ENCODE measurements at regions of chr21 and their contacts with region 1.

Region 1: DNA sequence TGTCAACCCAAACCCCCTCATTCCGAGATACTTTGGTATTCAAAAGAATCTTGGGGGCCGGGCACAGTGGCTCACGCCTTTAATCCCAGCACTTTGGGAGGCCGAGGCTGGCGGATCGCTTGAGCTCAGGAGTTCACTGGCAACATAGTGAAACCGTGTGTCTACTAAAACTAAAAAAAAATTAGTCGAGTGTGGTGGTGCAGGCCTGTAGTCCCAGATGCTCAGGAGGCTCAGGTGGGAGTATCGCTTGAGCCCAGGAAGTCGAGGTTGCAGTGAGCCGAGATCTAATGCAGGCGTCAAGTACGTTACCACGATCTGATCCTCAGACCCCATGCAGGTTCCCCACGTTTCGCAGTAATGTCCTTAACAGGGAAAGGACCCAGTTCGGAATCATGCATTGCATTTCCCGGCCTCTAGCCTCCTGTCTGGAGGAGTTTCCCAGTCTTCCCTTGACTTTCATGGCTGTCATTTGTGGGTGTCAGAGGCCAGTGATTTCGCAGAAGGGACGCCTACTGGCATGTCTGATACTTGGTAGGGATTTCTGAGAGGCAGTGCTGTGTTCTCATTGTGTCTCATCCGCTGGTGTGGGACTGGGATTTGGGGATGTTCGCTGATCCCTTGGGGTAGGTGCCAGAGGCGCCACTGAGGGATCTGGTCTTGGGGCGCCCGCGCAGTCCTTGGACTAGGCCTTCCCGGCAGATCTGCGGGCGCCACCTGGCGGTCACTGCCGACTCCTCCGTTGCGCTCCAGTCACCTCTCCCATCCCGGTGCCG is 39.3 kb upstream of the HMGN1 start:
- DNase-seq: peak; percentile 81
- H3K4me3 Mint-ChIP-seq: peak overlapping the region; percentile 84
- H3K27ac Mint-ChIP-seq: peak overlapping the region; percentile 87
- H3K4me1 Mint-ChIP-seq: peaks cover 20% of the 10 kb centered on the region
- H3K27me3 Mint-ChIP-seq: no peaks in the 10 kb centered on the region

Region 2: DNA sequence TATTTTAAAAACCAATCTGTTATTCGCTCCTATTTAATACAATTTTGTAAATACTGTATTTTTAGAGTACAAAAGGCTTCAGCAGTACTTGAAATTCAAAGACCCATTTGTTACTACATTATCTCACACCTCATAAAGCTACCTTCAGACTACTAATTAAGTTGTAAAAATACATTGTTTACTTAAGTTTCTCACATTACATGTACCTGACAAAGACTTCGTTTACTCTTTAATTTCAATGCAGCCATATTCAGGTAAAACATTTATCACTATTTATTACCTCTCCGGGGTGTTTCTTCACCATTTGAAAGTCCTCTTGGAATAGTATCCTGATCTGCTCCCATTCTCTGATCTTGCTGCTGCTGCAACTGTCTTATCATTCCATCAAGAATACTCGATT is 130.0 kb before region 1 on chr21:
- intact Hi-C with region 1: loop called (anchors 5 kb)
- DNase-seq: no peak
- H3K4me3 Mint-ChIP-seq: no peak overlapping the region
- H3K27ac Mint-ChIP-seq: no peak overlapping the region
- H3K4me1 Mint-ChIP-seq: peaks cover 2% of the 10 kb centered on the region
- H3K27me3 Mint-ChIP-seq: no peaks in the 10 kb centered on the region

Region 3: DNA sequence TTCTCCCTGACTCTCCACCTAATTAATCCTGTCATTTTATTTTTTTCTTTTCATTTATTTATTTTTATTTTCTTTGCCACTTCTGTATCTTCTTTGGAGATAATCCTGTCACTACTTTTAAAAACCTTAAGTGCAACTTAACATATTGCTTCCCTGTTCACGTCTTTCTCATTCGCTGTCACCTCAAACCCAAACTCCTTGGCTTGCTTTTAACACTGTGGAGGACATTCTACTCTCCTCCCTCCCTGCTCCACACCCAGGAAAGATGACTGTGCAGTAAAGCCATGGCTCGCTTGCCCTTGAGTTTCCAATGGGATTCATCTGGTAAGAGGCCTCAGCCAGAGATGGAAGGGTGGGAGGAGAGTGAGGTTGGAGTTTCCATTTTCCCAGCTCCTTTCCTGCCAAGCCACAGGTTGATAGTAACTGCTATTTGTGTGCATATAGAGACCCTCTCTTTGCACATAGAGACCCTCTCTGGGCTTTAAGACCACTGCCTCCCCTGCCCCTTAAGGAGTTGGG is 68.4 kb before region 1 on chr21:
- intact Hi-C with region 1: no loop called
- DNase-seq: no peak
- H3K4me3 Mint-ChIP-seq: no peak overlapping the region
- H3K27ac Mint-ChIP-seq: no peak overlapping the region
- H3K4me1 Mint-ChIP-seq: peaks cover 12% of the 10 kb centered on the region
- H3K27me3 Mint-ChIP-seq: peaks cover 2% of the 10 kb centered on the region

Region 4: GRCh38 chr21:39349211-39350093 is 38.8 kb before region 1 on chr21:
- intact Hi-C with region 1: loop called (anchors 1 kb)
- DNase-seq: peak; percentile 97
- H3K4me3 Mint-ChIP-seq: peak overlapping the region; percentile 99
- H3K27ac Mint-ChIP-seq: peak overlapping the region; percentile 100
- H3K4me1 Mint-ChIP-seq: peaks cover 32% of the 10 kb centered on the region
- H3K27me3 Mint-ChIP-seq: peaks cover 4% of the 10 kb centered on the region

Region 5: DNA sequence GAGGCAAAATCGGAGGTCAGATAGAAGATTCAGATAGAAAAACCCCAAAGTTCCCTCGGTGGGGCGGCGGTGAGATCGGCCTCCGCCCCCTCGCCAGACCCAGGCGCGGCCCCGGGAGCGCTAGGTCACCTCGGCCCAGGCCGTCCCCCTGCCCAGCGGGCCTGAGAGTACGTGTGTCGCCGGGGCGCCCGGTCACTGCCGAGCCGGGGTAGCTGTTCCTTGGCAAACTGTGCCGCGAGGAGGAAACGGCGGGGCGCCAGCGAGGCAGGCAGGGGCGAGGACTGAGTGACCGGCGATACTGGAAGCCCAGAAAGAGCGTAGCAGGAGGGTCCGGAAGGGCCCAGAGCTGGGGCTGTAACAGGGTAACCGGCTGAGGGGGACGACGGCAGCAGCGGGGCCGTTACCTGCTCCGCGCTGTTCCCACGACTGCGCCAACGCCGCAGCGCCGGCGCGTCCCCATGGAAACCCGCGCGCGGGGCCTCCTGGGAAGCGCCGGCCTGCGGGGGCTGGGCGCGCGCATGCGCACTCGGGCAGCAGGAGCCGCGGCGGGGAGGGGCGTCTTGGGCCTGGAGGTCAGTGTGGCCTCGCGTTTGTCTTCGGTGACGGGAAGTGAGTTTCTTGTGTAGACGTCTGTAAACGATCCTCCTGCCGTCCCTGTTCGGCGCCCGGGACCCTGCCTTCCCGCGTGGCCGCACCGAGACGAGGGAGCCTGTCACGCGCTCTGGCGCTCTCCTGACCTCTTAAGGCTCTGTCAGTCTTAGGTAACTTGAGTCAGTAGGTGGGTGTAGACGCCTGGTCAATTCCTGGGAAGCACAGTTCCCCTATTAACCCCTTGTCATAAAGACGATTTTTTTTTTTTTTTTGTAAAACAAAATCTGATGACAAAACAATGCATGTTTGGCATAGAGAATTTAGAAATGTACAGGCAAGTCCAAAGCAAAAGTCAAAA is 57.4 kb after region 1 on chr21 and contains the start of gene LCA5L:
- intact Hi-C with region 1: loop called (anchors 2 kb)
- DNase-seq: peak; percentile 88
- H3K4me3 Mint-ChIP-seq: peak within 1 kb of the TSS; percentile 89
- H3K27ac Mint-ChIP-seq: peak within 1 kb of the TSS; percentile 88
- H3K4me1 Mint-ChIP-seq: peaks cover 12% of the 10 kb centered on the region
- H3K27me3 Mint-ChIP-seq: peaks cover 40% of the 10 kb centered on the region
- total RNA-seq, gene LCA5L: 0.32 TPM in 1 of 2 replicates, not detected in the other